ENCODE measurements at regions of chr2 and their contacts with region 1.

Region 1: DNA sequence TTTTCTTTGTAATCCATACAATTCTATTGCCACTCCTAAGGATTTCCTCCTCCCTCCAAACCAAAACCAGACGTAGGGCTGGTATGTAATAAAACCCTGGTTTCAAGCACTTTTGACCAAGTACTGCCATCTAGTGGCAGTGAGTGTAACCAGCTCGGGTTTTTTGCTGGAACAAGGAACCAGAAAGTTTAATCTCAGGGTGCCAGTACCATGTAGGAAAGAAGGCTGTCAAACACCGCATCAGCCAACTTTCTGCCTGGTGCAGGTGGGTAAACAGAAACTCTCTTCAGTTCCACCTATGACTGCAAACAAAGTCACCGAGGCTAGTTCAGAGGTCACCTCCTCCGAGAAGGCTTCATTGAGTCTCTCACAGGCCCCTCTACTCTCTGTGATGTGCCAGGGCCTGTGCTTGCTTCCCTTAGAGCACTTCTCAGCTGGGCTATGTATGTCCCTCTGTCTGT is 10.2 kb upstream of the THNSL2 start:
- DNase-seq: peak; percentile 72
- H3K4me3 ChIP-seq: no peak overlapping the region
- H3K27ac ChIP-seq: no peak overlapping the region
- H3K4me1 ChIP-seq: no peaks in the 10 kb centered on the region
- CTCF ChIP-seq: peak; percentile 95

Region 2: DNA sequence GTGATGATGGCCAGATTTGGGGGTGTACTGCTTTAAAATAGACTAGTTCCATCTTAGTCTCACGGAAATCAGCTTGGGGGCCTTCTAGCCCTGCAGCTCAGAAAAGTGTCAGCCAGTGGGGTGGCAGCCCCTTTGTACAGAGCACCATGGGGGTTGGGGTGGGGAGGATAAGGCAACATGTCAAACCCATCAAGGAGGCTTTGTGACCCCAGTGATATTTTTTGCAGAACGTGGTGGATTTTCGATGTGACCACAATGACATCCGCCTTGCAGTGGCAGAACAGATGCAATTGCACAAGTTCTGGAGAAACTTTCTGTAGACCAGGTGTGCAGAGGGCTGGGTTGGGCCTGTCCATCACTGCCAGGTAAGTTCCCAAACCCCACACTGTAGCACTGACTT is 1366.2 kb before region 1 on chr2:
- CTCF ChIA-PET with region 1: no interaction called
- POLR2A ChIA-PET with region 1: no interaction called
- intact Hi-C with region 1: no loop called
- DNase-seq: no peak
- H3K4me3 ChIP-seq: no peak overlapping the region
- H3K27ac ChIP-seq: no peak overlapping the region
- H3K4me1 ChIP-seq: no peaks in the 10 kb centered on the region
- CTCF ChIP-seq: no peak

Region 3: GRCh38 chr2:88003074-88003755 is 156.8 kb before region 1 on chr2:
- CTCF ChIA-PET with region 1: no interaction called
- POLR2A ChIA-PET with region 1: no interaction called
- intact Hi-C with region 1: loop called (anchors 5 kb)
- DNase-seq: no peak
- H3K4me3 ChIP-seq: no peak overlapping the region
- H3K27ac ChIP-seq: no peak overlapping the region
- H3K4me1 ChIP-seq: peaks cover 6% of the 10 kb centered on the region
- CTCF ChIP-seq: no peak

Region 4: GRCh38 chr2:88059979-88060906 is 99.7 kb before region 1 on chr2:
- CTCF ChIA-PET with region 1: interaction called, 5 read pairs
- POLR2A ChIA-PET with region 1: interaction called, 5 read pairs
- intact Hi-C with region 1: loop called (anchors 1 kb)
- DNase-seq: peak; percentile 68
- H3K4me3 ChIP-seq: no peak overlapping the region
- H3K27ac ChIP-seq: no peak overlapping the region
- H3K4me1 ChIP-seq: peaks cover 8% of the 10 kb centered on the region
- CTCF ChIP-seq: peak; percentile 88

Measured in OCI-LY7 (cell line).